Sigmoid colon (tissue), 7 donors: ENCODE measurements at regions of chr15 and their contacts with region 1.

Region 1: DNA sequence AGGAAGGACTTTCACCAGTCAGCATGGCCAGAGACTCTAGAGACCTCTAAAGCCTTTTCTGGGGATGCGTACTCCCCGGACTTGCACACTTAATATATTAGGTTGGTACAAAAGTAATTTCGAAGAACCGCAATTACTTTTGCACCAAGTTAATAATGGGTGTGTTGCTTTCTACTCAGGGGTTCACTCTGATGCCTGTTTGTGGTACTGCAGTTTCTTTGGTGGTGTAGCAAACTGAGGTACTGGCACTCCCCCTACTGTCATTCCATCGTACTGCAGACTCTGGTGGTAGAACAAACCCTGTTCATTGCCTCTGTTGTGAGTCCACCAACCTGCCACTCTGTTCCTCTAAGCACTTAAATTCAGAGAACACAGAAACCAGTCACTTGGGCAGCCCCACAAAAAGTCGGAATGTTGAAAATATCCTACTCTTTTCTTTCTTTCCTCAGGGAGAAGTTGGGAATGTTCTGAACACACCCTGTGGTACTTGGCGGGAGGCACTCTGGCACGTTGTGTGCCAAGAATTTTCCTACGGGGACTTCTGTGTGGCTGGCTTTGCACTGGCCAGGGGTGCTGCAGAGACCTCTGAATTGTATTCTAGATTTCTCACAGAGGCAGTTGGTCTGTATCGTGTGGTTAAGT is 46.3 kb downstream of the GABRG3 start:
- DNase-seq: no peak
- H3K4me3 ChIP-seq: no peak overlapping the region
- H3K27ac ChIP-seq: no peak overlapping the region
- H3K4me1 ChIP-seq: no peaks in the 10 kb centered on the region
- H3K27me3 ChIP-seq: no peaks in the 10 kb centered on the region
- CTCF ChIP-seq: peak in 2 of 4 experiments; percentile 31 to 40
- EP300 ChIP-seq: no peak
- POLR2A ChIP-seq: no peak

Region 2: DNA sequence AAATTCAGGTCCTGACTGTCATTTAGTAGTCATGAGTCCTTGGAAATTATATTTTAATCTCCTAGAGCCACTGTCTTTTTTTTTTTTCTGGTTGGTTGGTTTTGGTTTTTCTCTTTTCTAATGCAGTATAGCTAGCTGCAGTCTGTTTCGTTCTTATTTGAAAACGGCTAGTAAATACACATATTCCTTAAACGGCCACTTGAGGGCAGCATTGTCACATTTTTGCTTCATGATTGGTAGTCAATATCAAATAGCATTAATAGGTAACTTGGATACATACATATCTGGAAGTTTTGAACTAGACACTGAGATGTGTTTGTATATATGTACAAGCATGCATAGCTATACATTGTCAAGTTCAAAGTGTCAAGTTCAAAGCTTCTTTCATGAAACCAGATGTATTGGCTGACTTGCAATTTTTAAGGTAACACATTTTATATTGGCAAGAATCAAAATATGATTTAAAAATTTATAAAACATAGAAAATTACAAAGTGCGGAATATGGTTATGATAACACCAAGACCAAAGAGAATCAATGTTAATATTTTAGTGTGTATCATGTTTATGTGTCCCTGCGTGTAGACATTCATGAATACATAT is 127.9 kb before region 1 on chr15:
- intact Hi-C with region 1: loop called (anchors 1 kb)
- DNase-seq: no peak
- H3K4me3 ChIP-seq: no peak overlapping the region
- H3K27ac ChIP-seq: no peak overlapping the region
- H3K4me1 ChIP-seq: peaks cover 0 to 16% (median 11%) of the 10 kb centered on the region in 4 donors
- H3K27me3 ChIP-seq: peaks cover 0 to 45% (median 10%) of the 10 kb centered on the region in 3 donors
- CTCF ChIP-seq: peak in 3 of 4 experiments; percentile 37 to 68 (median 50)
- EP300 ChIP-seq: no peak
- POLR2A ChIP-seq: no peak

Region 3: DNA sequence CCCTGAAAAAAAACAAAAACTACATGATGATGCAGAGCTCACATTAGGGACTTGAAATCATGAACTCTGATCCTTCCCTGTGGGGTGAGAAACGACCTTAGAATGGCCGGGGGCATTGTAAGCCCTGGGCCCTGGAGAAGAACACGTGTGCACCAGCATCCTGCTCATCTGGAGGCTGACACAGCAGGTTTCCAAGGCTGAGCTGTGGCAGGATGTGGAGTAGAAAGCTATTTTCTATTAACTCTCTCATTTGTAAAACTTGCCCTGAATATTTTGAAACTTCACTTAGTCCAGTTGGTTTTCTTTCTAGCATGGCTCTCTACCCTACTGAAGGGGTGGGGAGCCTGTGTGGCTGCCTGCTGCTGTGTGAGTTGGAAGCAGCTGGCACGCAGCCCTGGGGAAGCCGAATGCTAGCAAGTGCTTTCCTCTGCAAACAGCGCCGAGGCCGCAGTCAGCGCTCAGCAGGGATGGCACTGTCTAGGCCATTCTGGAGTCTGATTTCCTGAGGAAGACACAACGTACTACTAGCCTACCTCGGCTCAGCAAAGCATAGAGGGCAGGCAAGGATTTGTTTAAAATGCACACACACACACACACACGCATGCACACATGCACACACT is 11.7 kb after region 1 on chr15:
- intact Hi-C with region 1: no loop called
- DNase-seq: no peak
- H3K4me3 ChIP-seq: no peak overlapping the region
- H3K27ac ChIP-seq: no peak overlapping the region
- H3K4me1 ChIP-seq: peaks cover 0 to 5% (median 0%) of the 10 kb centered on the region in 4 donors
- H3K27me3 ChIP-seq: no peaks in the 10 kb centered on the region
- CTCF ChIP-seq: no peak
- EP300 ChIP-seq: no peak
- POLR2A ChIP-seq: no peak